ENCODE measurements at regions of chr15 and their contacts with region 1.

Region 1: DNA sequence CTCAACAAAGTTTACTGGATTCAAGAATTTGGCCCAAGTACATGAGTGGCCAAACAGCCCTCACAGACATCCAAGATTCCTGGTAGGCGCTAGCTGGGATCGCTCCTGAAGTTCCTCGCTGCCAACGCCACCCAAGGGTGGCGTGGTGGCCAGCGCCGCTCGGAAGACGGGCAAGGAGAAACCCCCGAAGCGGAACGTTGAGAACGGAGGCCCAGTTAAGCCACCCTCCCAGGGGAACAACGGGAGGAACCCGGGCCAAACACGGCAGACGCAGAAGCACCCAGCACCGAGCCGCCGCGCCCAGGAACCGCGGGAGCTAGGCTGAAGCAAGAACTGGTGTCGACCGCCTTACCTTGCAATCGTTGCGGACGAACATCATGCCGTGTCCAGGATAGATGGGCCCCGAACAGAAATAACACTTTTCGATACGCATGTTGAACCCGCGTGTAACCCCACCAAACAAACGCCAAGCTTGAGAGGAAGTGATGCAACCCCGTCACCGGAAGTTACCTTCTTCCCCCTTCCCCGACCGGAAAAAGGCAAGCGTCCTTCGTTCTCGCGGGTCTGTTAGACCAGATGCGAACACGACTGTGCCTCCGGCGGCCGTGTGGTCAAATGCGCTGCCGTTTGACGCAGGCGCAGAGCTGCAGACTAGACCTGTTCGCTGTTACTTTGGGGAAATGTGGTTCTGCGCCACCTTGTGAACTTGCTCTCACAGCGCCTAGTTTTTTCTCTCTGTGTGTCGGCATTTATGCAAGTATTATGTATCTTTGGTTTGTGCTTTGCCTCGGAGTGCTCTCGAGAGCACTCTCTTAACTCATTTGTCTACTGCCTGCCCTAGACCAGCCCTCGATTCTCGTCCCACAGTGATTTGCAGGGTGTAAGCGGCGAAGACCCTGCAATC is at the start of gene RSL24D1:
- DNase-seq: peak; percentile 99
- H3K4me3 Mint-ChIP-seq: no peak within 1 kb of the TSS
- H3K27ac Mint-ChIP-seq: no peak within 1 kb of the TSS
- H3K4me1 Mint-ChIP-seq: peaks cover 18% of the 10 kb centered on the region
- H3K27me3 Mint-ChIP-seq: no peaks in the 10 kb centered on the region
- CTCF ChIP-seq: peak; percentile 22
- total RNA-seq, gene RSL24D1: 162 and 167 TPM in 2 replicates

Region 2: GRCh38 chr15:55221090-55222011 is 24.6 kb after region 1 on chr15:
- CTCF ChIA-PET with region 1: interaction called, 6 read pairs
- POLR2A ChIA-PET with region 1: interaction called, 11 read pairs
- intact Hi-C with region 1: no loop called
- DNase-seq: peak; percentile 90
- H3K4me3 Mint-ChIP-seq: peak overlapping the region; percentile 34
- H3K27ac Mint-ChIP-seq: peak overlapping the region; percentile 91
- H3K4me1 Mint-ChIP-seq: peaks cover 22% of the 10 kb centered on the region
- H3K27me3 Mint-ChIP-seq: no peaks in the 10 kb centered on the region
- CTCF ChIP-seq: no peak

Region 3: DNA sequence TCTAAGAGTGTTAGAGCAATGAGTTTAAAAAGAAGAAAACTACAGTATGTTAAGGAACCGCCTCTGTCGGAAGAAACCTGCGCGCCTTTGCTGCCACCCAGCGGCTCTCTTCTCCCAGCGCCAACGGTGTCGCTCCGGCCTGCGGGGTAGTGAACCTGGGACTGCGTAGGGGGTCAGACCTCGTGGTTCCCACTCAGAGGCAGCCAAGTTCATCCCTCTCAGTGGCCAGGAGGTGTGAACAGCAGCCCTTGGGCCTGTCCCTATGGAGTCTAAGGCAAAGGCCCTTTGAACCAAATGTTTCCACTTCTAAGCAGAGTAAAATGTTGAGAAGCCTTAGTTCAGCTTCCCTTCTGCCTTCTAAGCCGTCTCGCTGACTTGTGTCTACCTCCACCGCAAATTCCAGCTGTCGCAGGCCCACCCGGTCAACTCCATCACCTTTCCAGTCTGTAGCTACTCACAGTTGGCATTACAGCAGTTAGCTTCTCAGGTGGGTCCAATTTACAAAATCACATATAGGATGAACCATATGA is 93.9 kb after region 1 on chr15:
- CTCF ChIA-PET with region 1: interaction called, 6 read pairs
- POLR2A ChIA-PET with region 1: interaction called, 14 read pairs
- intact Hi-C with region 1: loop called (anchors 1 kb)
- DNase-seq: peak; percentile 84
- H3K4me3 Mint-ChIP-seq: peak overlapping the region; percentile 89
- H3K27ac Mint-ChIP-seq: peak overlapping the region; percentile 92
- H3K4me1 Mint-ChIP-seq: peaks cover 15% of the 10 kb centered on the region
- H3K27me3 Mint-ChIP-seq: no peaks in the 10 kb centered on the region
- CTCF ChIP-seq: peak; percentile 84

Region 4: DNA sequence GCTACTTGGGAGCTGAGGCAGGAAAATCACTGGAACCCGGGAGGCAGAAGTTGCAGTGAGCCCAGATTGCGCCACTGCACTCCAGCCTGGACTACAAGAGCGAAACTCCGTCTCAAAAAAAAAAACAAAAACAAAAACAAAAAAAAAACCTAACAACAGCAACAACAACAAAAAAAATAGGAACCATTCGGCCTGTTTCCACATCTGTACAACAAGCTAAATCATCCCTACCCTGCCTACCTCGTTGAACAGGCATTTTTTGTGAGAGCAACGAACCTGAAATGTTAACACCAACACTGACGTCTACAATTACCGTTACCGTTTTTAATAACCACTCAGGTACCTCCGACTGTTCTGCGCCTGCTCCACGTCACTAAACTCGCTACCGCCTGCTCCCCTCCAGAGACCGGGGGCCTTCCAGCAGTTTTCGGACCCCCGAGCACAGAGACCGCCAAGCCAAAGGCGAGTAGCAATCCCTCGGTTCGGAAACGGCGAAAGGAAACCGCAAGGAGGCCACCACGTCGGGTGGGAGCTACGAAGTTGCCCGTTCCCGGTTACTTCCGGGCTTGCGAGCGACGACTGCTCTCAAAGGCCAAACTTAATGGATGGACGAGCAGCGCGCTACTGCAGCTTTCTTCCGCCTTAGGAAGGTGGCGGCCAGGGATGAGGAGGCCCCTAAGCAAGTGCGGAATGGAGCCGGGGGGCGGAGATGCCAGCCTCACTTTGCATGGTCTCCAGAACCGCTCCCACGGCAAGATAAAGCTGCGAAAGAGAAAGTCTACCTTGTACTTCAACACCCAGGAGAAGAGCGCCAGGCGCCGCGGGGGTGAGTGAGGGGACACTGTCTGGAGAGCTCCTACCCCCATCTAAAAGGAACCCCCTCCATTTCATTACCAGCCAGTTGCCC is 122.1 kb after region 1 on chr15 and contains the starts of genes PIGB and PIGBOS1:
- CTCF ChIA-PET with region 1: interaction called, 3 read pairs
- POLR2A ChIA-PET with region 1: interaction called, 22 read pairs
- intact Hi-C with region 1: no loop called
- DNase-seq: peak; percentile 86
- H3K4me3 Mint-ChIP-seq: peak within 1 kb of the TSS; percentile 93
- H3K27ac Mint-ChIP-seq: peak within 1 kb of the TSS; percentile 98
- H3K4me1 Mint-ChIP-seq: peaks cover 15% of the 10 kb centered on the region
- H3K27me3 Mint-ChIP-seq: no peaks in the 10 kb centered on the region
- CTCF ChIP-seq: no peak
- total RNA-seq, gene PIGB: 16.2 and 22.2 TPM in 2 replicates
- total RNA-seq, gene PIGBOS1: 13.9 and 16.1 TPM in 2 replicates